PC-3 (cell line): ENCODE measurements at regions of chr17 and their contacts with region 1.

Region 1: GRCh38 chr17:48724251-48725003 is 1.4 kb downstream of the PRAC2 start:
- DNase-seq: peak; percentile 97
- ATAC-seq: peak; percentile 6
- H3K4me3 ChIP-seq: peak overlapping the region; percentile 90
- H3K27ac ChIP-seq: peak overlapping the region; percentile 91
- H3K4me1 ChIP-seq: peaks cover 39% of the 10 kb centered on the region
- H3K27me3 ChIP-seq: no peaks in the 10 kb centered on the region
- CTCF ChIP-seq: peak; percentile 96

Region 2: GRCh38 chr17:48678141-48678971 is 46.1 kb before region 1 on chr17:
- CTCF ChIA-PET with region 1: interaction called, 58 read pairs
- POLR2A ChIA-PET with region 1: interaction called, 6 read pairs
- intact Hi-C with region 1: loop called (anchors 1 kb)
- DNase-seq: peak; percentile 90
- ATAC-seq: peak; percentile 91
- H3K4me3 ChIP-seq: peak overlapping the region; percentile 68
- H3K27ac ChIP-seq: no peak overlapping the region
- H3K4me1 ChIP-seq: peaks cover 11% of the 10 kb centered on the region; the same call in 1 of the 2 replicates
- H3K27me3 ChIP-seq: no peaks in the 10 kb centered on the region
- CTCF ChIP-seq: peak; percentile 100

Region 3: GRCh38 chr17:48747445-48748363 is 23.3 kb after region 1 on chr17:
- CTCF ChIA-PET with region 1: interaction called, 5 read pairs
- POLR2A ChIA-PET with region 1: interaction called, 26 read pairs
- intact Hi-C with region 1: loop called (anchors 1 kb)
- DNase-seq: peak; percentile 71
- ATAC-seq: peak; percentile 27
- H3K4me3 ChIP-seq: peak overlapping the region; percentile 78
- H3K27ac ChIP-seq: peak overlapping the region; percentile 74
- H3K4me1 ChIP-seq: peaks cover 50% of the 10 kb centered on the region
- H3K27me3 ChIP-seq: no peaks in the 10 kb centered on the region
- CTCF ChIP-seq: no peak

Region 4: DNA sequence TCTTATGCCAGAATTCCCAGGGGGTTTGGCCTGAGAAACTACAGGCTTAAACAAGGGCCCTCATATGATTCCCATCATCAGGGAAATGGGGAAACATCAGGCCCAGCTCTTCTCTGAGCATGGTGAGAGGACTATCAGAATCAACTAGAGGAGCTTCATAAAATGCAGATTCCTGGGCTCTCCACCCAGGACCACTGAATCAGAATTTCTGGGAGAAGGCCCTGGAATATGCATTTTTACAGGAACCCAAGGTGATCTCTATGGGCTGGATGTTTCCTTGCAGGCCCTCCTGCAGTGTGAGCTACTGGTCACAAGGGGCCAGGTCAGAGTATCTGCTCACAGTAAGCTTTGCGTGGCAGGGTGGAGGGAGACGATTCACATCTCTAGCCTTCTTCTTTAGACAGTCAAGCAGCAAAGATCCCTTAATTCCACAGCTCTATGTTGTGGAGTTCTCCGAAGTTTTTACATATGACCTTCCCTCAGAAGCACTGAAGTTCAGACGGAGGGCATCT is 42.9 kb after region 1 on chr17:
- CTCF ChIA-PET with region 1: no interaction called
- POLR2A ChIA-PET with region 1: interaction called, 19 read pairs
- intact Hi-C with region 1: no loop called
- DNase-seq: peak; percentile 37
- ATAC-seq: peak; percentile 79
- H3K4me3 ChIP-seq: no peak overlapping the region
- H3K27ac ChIP-seq: no peak overlapping the region
- H3K4me1 ChIP-seq: no peaks in the 10 kb centered on the region
- H3K27me3 ChIP-seq: no peaks in the 10 kb centered on the region
- CTCF ChIP-seq: no peak; the same call in 1 of the 2 replicates

Region 5: DNA sequence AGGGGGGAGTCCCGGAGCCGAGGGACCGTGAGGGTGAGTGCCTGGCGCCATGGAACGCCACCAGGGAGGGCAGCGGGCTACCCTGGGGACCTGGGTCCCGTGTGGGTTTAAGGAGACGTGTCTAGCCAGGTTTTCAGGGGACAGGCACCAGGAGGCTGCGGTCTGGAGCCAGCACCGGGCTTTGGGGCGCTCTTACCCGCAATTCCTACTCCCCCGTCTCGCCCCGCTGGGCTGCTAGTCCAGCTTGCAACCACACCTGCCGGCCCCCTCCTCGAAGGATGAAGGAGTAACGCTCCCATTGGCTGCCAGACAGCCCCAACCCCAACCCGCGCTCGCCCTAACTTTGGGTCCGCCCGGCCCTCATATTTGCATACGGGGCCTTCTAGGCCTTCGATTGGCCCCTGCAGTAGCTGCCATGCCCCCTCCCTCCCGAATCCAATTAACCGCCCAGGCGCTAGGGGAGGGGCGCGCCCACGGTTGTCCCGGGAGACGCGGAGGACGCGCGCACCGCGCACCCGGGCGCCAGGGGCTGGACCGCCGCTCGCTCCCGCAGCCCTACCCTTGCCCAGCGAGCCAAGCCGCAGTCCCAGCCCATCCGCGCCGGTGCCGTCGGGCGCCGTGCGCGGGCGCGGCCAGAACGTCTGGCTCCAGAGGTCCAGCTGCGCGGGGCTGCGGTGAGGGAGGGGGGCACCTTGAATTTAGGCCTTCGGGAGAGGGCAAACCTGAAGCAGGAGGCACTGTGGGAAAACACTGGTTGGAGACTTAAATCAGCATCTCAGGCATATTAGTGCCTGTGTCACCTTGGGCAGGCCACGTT is 92.6 kb after region 1 on chr17 and contains the start of gene TTLL6:
- CTCF ChIA-PET with region 1: interaction called, 3 read pairs
- POLR2A ChIA-PET with region 1: interaction called, 17 read pairs
- intact Hi-C with region 1: no loop called
- DNase-seq: peak; percentile 98
- ATAC-seq: peak; percentile 96
- H3K4me3 ChIP-seq: peak within 1 kb of the TSS; percentile 65
- H3K27ac ChIP-seq: no peak within 1 kb of the TSS
- H3K4me1 ChIP-seq: peaks cover 12% of the 10 kb centered on the region
- H3K27me3 ChIP-seq: no peaks in the 10 kb centered on the region
- CTCF ChIP-seq: no peak
- total RNA-seq, gene TTLL6: 0.29 and 0.40 TPM in 2 replicates

Region 6: GRCh38 chr17:48892940-48893645 is 168.7 kb after region 1 on chr17:
- CTCF ChIA-PET with region 1: no interaction called
- POLR2A ChIA-PET with region 1: no interaction called
- intact Hi-C with region 1: loop called (anchors 2 kb)
- DNase-seq: no peak
- ATAC-seq: no peak
- H3K4me3 ChIP-seq: peak overlapping the region; percentile 95
- H3K27ac ChIP-seq: peak overlapping the region; percentile 69
- H3K4me1 ChIP-seq: peaks cover 29% of the 10 kb centered on the region
- H3K27me3 ChIP-seq: no peaks in the 10 kb centered on the region
- CTCF ChIP-seq: no peak